Activated CD4-positive, alpha-beta T cell treated with anti-CD3 and anti-CD28 coated beads, Interleukin-2, amount 10 ng/mL, durations not matched to agents 24 days and 14 days (primary cell): ENCODE measurements at regions of chr14 and their contacts with region 1.

Region 1: GRCh38 chr14:39247256-39247655 is 13.5 kb downstream of the MIA2 start:
- DNase-seq: peak; percentile 13
- H3K4me3 Mint-ChIP-seq: no peak overlapping the region
- H3K27ac Mint-ChIP-seq: no peak overlapping the region
- H3K4me1 Mint-ChIP-seq: no peaks in the 10 kb centered on the region
- H3K27me3 Mint-ChIP-seq: peaks cover 8% of the 10 kb centered on the region

Region 2: DNA sequence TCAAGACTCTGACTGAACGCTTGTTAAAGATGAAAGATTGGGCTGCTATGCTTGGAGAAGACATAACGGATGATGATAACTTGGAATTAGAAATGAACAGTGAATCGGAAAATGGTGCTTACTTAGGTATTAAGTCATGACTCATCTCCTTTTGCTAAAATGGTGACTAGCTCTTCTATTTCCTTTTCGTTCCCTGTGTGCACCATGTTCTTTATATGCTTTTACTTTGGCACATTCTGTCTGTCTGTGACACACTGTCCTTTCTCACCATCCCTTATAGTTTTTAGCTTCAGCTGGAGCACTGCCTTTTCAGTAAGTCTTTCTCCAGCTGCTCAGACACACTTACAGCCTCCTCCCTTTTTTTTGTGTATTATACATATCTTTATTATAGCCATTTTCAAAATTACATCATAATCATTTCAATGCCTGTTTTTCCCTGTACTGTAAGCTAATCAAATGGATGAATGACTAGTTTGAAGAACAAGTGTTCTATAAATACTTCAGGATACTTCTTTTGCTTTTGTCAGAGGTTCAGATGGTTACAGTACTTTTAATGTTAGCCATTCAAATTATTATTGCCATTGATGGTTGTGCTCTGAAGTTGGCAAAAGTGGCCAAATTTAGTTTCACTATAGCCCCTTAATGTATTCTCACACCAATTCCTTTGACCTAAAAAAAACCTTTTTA is 55.0 kb after region 1 on chr14:
- intact Hi-C with region 1: loop called (anchors 2 kb)
- DNase-seq: no peak
- H3K4me3 Mint-ChIP-seq: no peak overlapping the region
- H3K27ac Mint-ChIP-seq: no peak overlapping the region
- H3K4me1 Mint-ChIP-seq: peaks cover 2% of the 10 kb centered on the region
- H3K27me3 Mint-ChIP-seq: no peaks in the 10 kb centered on the region

Region 3: DNA sequence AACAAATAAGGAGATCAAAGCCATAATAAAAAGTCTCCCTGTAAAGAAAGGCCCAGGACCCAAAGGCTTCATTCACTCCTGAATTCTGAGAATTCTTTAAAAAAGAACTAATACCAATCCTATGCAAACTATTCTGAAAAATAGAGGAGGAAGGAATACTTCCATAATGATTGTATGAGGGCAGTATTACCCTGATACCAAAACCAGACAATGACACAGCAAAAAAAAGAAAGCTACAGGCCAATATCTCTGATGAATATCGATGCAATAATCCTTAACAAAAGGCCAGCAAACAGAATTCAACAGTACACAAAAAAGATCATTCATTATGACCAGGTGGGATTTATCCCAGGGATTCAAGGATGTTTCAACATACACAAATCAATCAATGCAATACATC is 642.8 kb after region 1 on chr14:
- intact Hi-C with region 1: no loop called
- DNase-seq: no peak
- H3K4me3 Mint-ChIP-seq: no peak overlapping the region
- H3K27ac Mint-ChIP-seq: no peak overlapping the region
- H3K4me1 Mint-ChIP-seq: no peaks in the 10 kb centered on the region
- H3K27me3 Mint-ChIP-seq: no peaks in the 10 kb centered on the region